ENCODE measurements at regions of chr19 and their contacts with region 1.

Region 1: GRCh38 chr19:18388100-18388959 is 2.4 kb downstream of the GDF15 start:
- DNase-seq: peak; percentile 98
- H3K4me3 ChIP-seq: peak overlapping the region; percentile 51 to 60; a peak in 3 of 4 replicates
- H3K27ac ChIP-seq: no peak overlapping the region
- H3K4me1 ChIP-seq: peaks cover 0 to 9% of the 10 kb centered on the region in 2 experiments; a peak in 1 of 4 replicates
- H3K27me3 ChIP-seq: no peaks in the 10 kb centered on the region
- CTCF ChIP-seq: peak; percentile 85
- EP300 ChIP-seq: no peak
- RAD21 ChIP-seq: peak; percentile 59

Region 2: GRCh38 chr19:18340190-18340989 is 47.9 kb before region 1 on chr19 and contains the start of gene PGPEP1:
- CTCF ChIA-PET with region 1: interaction called, 18 read pairs
- POLR2A ChIA-PET with region 1: no interaction called
- DNase-seq: peak; percentile 96
- H3K4me3 ChIP-seq: peak within 1 kb of the TSS; percentile 59 to 90
- H3K27ac ChIP-seq: no peak within 1 kb of the TSS; a peak in 1 of 4 replicates
- H3K4me1 ChIP-seq: peaks cover 0 to 9% of the 10 kb centered on the region in 2 experiments; a peak in 1 of 4 replicates
- H3K27me3 ChIP-seq: no peaks in the 10 kb centered on the region
- CTCF ChIP-seq: no peak
- EP300 ChIP-seq: no peak
- RAD21 ChIP-seq: no peak
- polyA plus RNA-seq, gene PGPEP1: 13.8 and 13.9 TPM in 2 replicates

Region 3: DNA sequence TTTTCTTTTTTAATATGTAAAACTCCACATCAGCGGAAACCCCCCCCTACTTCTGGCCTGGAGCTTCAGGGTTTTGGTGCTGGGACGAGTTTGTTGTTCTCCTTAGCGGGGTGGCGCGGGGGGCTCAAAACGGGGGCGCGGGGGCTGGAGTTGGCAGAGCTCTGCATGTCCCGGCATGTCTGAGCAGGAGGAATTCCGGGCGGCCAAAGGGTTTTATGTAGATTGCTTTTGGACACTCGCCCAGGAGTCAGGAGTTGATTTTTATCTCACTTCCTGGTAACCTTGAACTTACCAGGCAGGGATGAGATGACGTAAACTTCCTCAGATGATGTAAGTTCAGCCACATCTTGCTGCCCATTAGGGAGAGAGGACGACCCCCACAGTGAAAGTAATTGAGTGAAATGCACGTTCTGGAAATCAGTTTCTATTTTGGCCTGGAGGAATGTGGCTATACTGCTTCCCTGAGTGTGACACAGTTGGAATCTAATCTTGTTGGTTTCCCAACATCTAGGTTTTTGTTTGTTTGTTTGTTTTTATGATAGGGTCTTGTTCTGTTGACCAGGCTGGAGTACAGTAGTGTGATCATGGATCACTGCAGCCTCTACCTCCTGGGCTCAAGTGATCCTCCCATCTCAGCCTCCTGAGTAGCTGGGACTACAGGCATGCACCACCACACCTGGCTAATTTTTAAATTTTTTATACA is 23.4 kb before region 1 on chr19:
- CTCF ChIA-PET with region 1: interaction called, 44 read pairs
- POLR2A ChIA-PET with region 1: no interaction called
- DNase-seq: peak; percentile 86
- H3K4me3 ChIP-seq: no peak overlapping the region
- H3K27ac ChIP-seq: peak overlapping the region; percentile 96 to 98
- H3K4me1 ChIP-seq: peaks cover 20 to 23% of the 10 kb centered on the region in 2 experiments; a peak in 3 of 4 replicates
- H3K27me3 ChIP-seq: no peaks in the 10 kb centered on the region
- CTCF ChIP-seq: no peak
- EP300 ChIP-seq: peak; percentile 84 to 91; a peak in 3 of 4 replicates
- RAD21 ChIP-seq: no peak

Region 4: GRCh38 chr19:18408053-18408476 is 19.7 kb after region 1 on chr19:
- CTCF ChIA-PET with region 1: interaction called, 160 read pairs
- POLR2A ChIA-PET with region 1: no interaction called
- DNase-seq: peak; percentile 62
- H3K4me3 ChIP-seq: no peak overlapping the region
- H3K27ac ChIP-seq: no peak overlapping the region
- H3K4me1 ChIP-seq: no peaks in the 10 kb centered on the region
- H3K27me3 ChIP-seq: no peaks in the 10 kb centered on the region
- CTCF ChIP-seq: peak; percentile 55
- EP300 ChIP-seq: no peak
- RAD21 ChIP-seq: peak; percentile 48

Measured in SK-N-SH (cell line).